ENCODE measurements at regions of chr9 and their contacts with region 1.

Region 1: DNA sequence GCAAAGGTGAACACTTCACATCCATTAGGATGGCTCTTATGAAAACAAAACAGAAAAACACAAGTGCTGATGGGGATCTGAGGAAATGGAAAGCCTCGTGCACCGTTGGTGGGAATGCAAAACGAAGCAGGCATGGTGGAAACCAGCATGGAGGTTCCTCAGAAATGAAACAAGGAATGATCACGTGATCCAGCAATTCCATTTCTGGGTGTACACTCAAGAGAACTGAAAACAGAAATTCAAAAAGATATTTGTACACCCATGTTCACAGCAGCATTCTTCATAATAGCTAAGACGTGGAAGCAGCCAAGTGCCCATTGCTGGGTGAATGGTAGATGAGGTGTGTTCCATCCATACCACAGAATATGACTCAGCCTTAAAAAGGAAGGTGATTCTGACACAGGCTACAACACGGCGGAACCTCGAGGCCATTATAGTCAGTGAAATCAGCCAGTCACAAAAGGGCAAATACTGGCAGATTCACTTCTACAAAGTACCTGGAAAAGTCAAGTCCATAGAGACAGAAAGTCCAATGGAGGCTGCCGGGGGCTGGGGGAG is 87.2 kb upstream of the RAPGEF1 start:
- DNase-seq: no peak
- H3K4me3 ChIP-seq: no peak overlapping the region
- H3K27ac ChIP-seq: no peak overlapping the region
- H3K4me1 ChIP-seq: no peaks in the 10 kb centered on the region
- H3K27me3 ChIP-seq: no peaks in the 10 kb centered on the region
- CTCF ChIP-seq: no peak
- EP300 ChIP-seq: no peak
- POLR2A ChIP-seq: no peak
- RAD21 ChIP-seq: no peak

Region 2: DNA sequence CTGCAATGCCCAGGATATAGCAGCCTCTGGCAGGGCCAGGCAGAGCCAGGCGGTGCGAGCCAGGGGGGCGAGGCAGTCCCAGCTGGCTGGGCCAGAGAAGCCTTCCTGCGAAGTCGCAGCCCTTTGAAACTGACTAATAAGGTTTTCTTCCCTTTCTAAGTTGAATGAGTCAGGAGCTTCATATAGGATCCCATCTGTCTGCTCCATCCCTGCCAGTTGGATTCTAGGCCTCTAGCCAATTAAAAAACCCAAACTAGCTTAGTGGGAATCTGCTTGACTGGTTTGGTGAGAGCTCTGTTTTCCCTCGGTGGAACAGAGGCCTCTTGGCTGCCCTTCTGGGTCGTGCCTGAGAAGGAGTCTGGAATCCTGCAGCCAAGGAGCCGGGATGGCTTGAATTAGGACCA is 17.1 kb before region 1 on chr9:
- CTCF ChIA-PET with region 1: interaction called, 17 read pairs
- POLR2A ChIA-PET with region 1: no interaction called
- DNase-seq: no peak
- H3K4me3 ChIP-seq: no peak overlapping the region
- H3K27ac ChIP-seq: no peak overlapping the region
- H3K4me1 ChIP-seq: peaks cover 6 to 27% (median 20%) of the 10 kb centered on the region in 4 experiments
- H3K27me3 ChIP-seq: no peaks in the 10 kb centered on the region
- CTCF ChIP-seq: no peak
- EP300 ChIP-seq: no peak
- POLR2A ChIP-seq: no peak
- RAD21 ChIP-seq: no peak

Region 3: DNA sequence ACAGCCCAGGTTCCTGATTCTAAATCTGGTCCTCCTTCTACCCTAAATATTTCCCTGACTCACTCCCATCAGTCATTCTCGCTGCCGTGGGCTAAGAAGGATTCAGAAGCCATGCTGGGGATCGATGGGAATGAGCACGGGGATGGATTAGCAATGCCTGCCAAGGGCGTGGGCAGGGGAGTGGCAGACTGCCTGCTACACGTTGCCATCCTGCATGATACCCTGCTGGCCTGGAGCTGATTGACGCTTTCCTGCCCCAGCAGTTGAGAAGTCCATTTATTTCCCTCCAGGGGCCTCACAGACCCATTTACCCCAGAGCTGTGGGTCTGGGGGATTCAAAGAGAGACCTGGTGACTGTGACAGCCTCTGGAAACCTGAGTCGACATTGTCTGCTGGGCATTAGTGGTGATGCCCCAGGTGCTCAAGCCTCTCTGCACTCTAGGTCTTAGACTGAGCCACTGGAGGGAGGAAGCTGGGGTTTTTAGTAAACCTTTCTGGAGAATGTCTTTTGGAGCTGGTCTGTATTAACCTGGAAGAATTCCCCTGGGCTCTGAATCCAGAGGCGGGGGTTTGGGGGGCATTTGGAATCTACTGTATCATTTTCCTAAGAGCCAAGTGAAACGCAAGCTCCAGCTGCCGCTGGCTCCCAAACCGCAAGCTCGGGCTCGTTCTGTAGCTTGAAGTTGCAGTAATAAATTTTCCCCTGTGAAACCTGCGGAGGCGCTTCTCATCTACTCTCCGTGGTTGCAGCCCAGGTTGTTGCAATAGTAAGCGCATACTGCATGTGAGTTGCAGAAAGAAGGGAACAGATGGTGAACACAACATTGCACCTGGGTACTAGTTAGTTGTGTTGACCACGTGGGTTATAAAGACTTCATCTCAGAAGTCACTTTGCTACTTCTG is 10.8 kb before region 1 on chr9:
- CTCF ChIA-PET with region 1: interaction called, 16 read pairs
- POLR2A ChIA-PET with region 1: no interaction called
- DNase-seq: no peak
- H3K4me3 ChIP-seq: no peak overlapping the region
- H3K27ac ChIP-seq: no peak overlapping the region
- H3K4me1 ChIP-seq: 0 out of 7 replicates have a peak, but pooled peaks cover 0 to 8% (median under 1%) of the 10 kb centered on the region in 4 experiments
- H3K27me3 ChIP-seq: no peaks in the 10 kb centered on the region
- CTCF ChIP-seq: no peak
- EP300 ChIP-seq: no peak
- POLR2A ChIP-seq: no peak
- RAD21 ChIP-seq: no peak

Region 4: DNA sequence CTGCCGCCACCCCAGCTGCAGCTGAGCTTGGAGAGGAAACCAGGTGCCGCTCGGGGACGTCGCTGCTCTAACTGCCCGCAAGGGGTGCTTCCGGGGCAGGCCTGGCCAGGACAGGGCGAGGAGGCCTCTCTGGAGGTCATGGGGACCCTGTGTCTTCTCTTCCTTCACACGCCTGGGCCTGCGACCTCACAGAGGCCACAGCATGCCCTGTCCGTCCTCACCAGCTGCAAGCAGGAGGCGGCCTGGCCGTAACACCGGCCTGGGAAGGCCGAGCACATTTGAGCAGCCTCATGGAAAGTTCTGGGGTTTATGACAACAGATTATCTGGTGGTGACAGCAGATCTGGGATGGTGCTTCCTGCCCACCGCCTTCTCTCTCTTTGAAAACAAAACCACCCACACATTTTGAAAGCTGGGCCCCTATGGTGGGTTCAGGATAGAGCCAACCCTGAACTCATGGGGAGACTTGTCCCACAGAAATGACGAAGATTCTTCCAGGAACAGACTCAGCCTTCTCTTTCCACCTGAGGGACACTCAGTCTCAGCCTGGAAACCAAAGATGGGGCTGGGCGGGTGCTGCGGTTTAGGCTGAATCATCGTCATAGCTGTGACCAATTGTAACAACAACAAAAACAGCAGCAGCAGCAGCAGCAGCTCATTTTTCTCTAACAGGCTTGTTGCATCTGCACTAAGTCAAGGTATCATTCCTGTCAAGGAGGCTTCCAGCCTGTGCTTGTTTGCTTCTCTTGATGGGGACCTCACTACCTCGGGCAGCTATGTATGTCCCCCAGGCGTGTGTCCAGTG is 12.4 kb after region 1 on chr9:
- CTCF ChIA-PET with region 1: interaction called, 11 read pairs
- POLR2A ChIA-PET with region 1: no interaction called
- DNase-seq: no peak
- H3K4me3 ChIP-seq: no peak overlapping the region
- H3K27ac ChIP-seq: no peak overlapping the region
- H3K4me1 ChIP-seq: peaks cover 0 to 3% (median 0%) of the 10 kb centered on the region in 4 experiments; a peak in 2 of 7 replicates
- H3K27me3 ChIP-seq: no peaks in the 10 kb centered on the region
- CTCF ChIP-seq: no peak
- EP300 ChIP-seq: no peak
- POLR2A ChIP-seq: no peak
- RAD21 ChIP-seq: no peak

Region 5: GRCh38 chr9:131942146-131942720 is 115.2 kb after region 1 on chr9:
- CTCF ChIA-PET with region 1: no interaction called
- POLR2A ChIA-PET with region 1: no interaction called
- DNase-seq: no peak
- H3K4me3 ChIP-seq: no peak overlapping the region
- H3K27ac ChIP-seq: no peak overlapping the region
- H3K4me1 ChIP-seq: peaks cover 0 to 17% (median 9%) of the 10 kb centered on the region in 4 experiments; a peak in 5 of 7 replicates
- H3K27me3 ChIP-seq: no peaks in the 10 kb centered on the region
- CTCF ChIP-seq: no peak
- EP300 ChIP-seq: no peak
- POLR2A ChIP-seq: no peak
- RAD21 ChIP-seq: no peak

Region 6: DNA sequence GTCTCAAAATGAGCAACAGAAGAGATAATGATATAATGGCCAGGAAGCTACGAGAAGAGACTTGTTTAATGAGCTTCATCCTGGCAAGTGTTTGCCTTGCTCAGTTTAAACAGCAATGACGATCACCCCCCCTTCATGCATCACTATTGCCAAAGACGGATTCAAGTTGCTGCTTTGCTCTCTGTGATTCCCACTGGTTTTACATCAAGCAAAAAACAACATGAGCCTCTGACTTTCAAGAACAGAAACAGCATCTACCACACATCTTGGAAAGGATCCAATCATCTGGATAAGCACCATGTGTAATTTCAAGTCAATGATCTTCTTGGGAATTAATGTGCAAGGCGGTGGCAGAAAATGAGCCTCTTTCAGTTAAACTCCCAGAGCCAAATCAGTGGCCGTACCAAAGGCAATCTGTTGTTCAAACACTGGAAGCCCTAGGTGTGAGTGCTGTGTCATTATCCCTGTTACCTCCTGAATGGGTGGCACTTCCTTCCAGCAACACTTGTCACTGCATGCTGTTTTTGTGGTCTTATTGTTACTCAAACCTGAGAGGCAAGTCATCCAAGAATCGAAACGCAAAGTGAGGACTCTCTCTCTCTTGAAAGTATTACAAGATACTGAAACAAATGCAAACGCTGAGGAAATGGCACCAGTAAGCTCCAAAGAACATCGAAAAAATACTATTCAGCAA is 179.8 kb after region 1 on chr9:
- CTCF ChIA-PET with region 1: no interaction called
- POLR2A ChIA-PET with region 1: no interaction called
- DNase-seq: no peak
- H3K4me3 ChIP-seq: no peak overlapping the region
- H3K27ac ChIP-seq: no peak overlapping the region
- H3K4me1 ChIP-seq: peaks cover 10 to 34% (median 23%) of the 10 kb centered on the region in 4 experiments
- H3K27me3 ChIP-seq: no peaks in the 10 kb centered on the region
- CTCF ChIP-seq: no peak
- EP300 ChIP-seq: no peak
- POLR2A ChIP-seq: no peak
- RAD21 ChIP-seq: no peak